ENCODE measurements at regions of chr1 and their contacts with region 1.

Region 1: DNA sequence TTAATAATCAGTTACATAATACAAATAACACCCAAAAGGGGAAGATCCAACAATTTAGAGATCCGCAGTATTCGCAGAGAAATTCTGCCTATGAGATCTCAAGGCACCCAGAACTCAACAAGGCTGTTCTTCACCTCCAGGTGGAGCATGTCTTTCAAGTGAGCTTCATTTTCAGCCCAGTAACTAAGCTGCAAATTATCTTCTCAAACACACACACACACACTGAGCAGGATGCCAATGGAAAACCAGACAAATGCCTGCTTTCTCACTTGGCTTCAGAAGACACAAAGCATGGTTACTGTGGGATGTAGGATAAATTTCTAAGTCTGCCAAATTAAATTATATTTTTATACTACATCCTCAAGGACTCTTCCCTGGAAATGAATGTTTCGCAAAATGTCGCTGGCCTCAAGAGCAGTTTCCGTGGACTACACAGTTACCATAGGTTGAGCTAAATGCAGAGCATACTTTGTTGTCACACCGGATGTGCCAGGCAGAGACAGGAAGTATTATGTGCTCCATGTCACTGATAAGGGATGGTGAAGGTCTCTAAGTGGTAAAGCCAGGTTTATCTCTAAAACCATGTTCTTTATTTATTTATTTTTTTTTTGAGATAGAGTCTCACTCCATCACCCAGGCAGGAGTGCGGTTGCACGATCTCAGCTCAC is 30.3 kb downstream of the UBR4 start:
- DNase-seq: peak; percentile 51 to 83 (median 66)
- ATAC-seq: peak; percentile 92
- H3K4me3 ChIP-seq: no peak overlapping the region
- H3K27ac ChIP-seq: peak overlapping the region; percentile 73
- H3K4me1 ChIP-seq: peaks cover 5 to 23% of the 10 kb centered on the region in 2 experiments; a peak in 3 of 5 replicates
- H3K27me3 ChIP-seq: no peaks in the 10 kb centered on the region
- CTCF ChIP-seq: peak; percentile 58 to 67 (median 58)
- EP300 ChIP-seq: peak; percentile 61; the same call in 1 of the 2 replicates
- POLR2A ChIP-seq: no peak
- RAD21 ChIP-seq: peak in 1 of 2 experiments; percentile 68; a peak in 3 of 4 replicates

Region 2: GRCh38 chr1:19163261-19163660 is 16.5 kb before region 1 on chr1:
- CTCF ChIA-PET with region 1: interaction called, 5 read pairs
- POLR2A ChIA-PET with region 1: interaction called, 11 read pairs
- in situ Hi-C with region 1: no loop called
- intact Hi-C with region 1: no loop called
- DNase-seq: no peak
- ATAC-seq: no peak
- H3K4me3 ChIP-seq: no peak overlapping the region
- H3K27ac ChIP-seq: no peak overlapping the region
- H3K4me1 ChIP-seq: no peaks in the 10 kb centered on the region
- H3K27me3 ChIP-seq: no peaks in the 10 kb centered on the region
- CTCF ChIP-seq: no peak
- EP300 ChIP-seq: no peak
- POLR2A ChIP-seq: no peak
- RAD21 ChIP-seq: no peak

Region 3: GRCh38 chr1:19169642-19170041 is 10.1 kb before region 1 on chr1:
- CTCF ChIA-PET with region 1: interaction called, 5 read pairs
- POLR2A ChIA-PET with region 1: interaction called, 17 read pairs
- in situ Hi-C with region 1: no loop called
- intact Hi-C with region 1: no loop called
- DNase-seq: peak in 2 of 4 experiments; percentile 44
- ATAC-seq: peak; percentile 17; the same call in 1 of the 3 replicates
- H3K4me3 ChIP-seq: no peak overlapping the region
- H3K27ac ChIP-seq: peak overlapping the region; percentile 57
- H3K4me1 ChIP-seq: peaks cover 0 to 5% of the 10 kb centered on the region in 2 experiments; a peak in 2 of 5 replicates
- H3K27me3 ChIP-seq: no peaks in the 10 kb centered on the region
- CTCF ChIP-seq: no peak
- EP300 ChIP-seq: peak; percentile 25; the same call in 1 of the 2 replicates
- POLR2A ChIP-seq: no peak
- RAD21 ChIP-seq: no peak

Region 4: GRCh38 chr1:19197845-19198244 is 18.1 kb after region 1 on chr1:
- CTCF ChIA-PET with region 1: no interaction called
- POLR2A ChIA-PET with region 1: interaction called, 12 read pairs
- in situ Hi-C with region 1: no loop called
- intact Hi-C with region 1: no loop called
- DNase-seq: peak in 2 of 4 experiments; percentile 31 to 37
- ATAC-seq: no peak
- H3K4me3 ChIP-seq: no peak overlapping the region
- H3K27ac ChIP-seq: no peak overlapping the region
- H3K4me1 ChIP-seq: peaks cover 3 to 10% of the 10 kb centered on the region in 2 experiments; a peak in 3 of 5 replicates
- H3K27me3 ChIP-seq: no peaks in the 10 kb centered on the region
- CTCF ChIP-seq: no peak
- EP300 ChIP-seq: no peak
- POLR2A ChIP-seq: no peak
- RAD21 ChIP-seq: no peak

Region 5: GRCh38 chr1:19209990-19210771 is 30.4 kb after region 1 on chr1 and contains the start of gene UBR4:
- CTCF ChIA-PET with region 1: no interaction called
- POLR2A ChIA-PET with region 1: interaction called, 4 read pairs
- in situ Hi-C with region 1: no loop called
- intact Hi-C with region 1: loop called (anchors 2 kb)
- DNase-seq: peak; percentile 93 to 100 (median 94)
- ATAC-seq: peak; percentile 88
- H3K4me3 ChIP-seq: peak within 1 kb of the TSS; percentile 84
- H3K27ac ChIP-seq: peak within 1 kb of the TSS; percentile 97
- H3K4me1 ChIP-seq: peaks cover 18 to 39% of the 10 kb centered on the region in 2 experiments
- H3K27me3 ChIP-seq: no peaks in the 10 kb centered on the region
- CTCF ChIP-seq: peak in 2 of 3 experiments; percentile 7 to 10; a peak in 1 of 6 replicates
- EP300 ChIP-seq: peak; percentile 64; the same call in 1 of the 2 replicates
- POLR2A ChIP-seq: peak; percentile 93
- RAD21 ChIP-seq: no peak; a peak in 1 of 4 replicates
- polyA plus RNA-seq, gene UBR4: 110 to 123 TPM

Region 6: GRCh38 chr1:19240673-19241538 is 61.2 kb after region 1 on chr1:
- CTCF ChIA-PET with region 1: interaction called, 23 read pairs
- POLR2A ChIA-PET with region 1: interaction called, 4 read pairs
- in situ Hi-C with region 1: no loop called
- intact Hi-C with region 1: loop called (anchors 2 kb)
- DNase-seq: peak; percentile 74 to 86 (median 76)
- ATAC-seq: peak; percentile 96
- H3K4me3 ChIP-seq: no peak overlapping the region
- H3K27ac ChIP-seq: no peak overlapping the region
- H3K4me1 ChIP-seq: no peaks in the 10 kb centered on the region; a peak in 1 of 5 replicates
- H3K27me3 ChIP-seq: no peaks in the 10 kb centered on the region
- CTCF ChIP-seq: peak; percentile 79 to 96 (median 90)
- EP300 ChIP-seq: no peak
- POLR2A ChIP-seq: no peak
- RAD21 ChIP-seq: peak; percentile 77 to 83